Lower lobe of right lung (tissue), 2 donors: ENCODE measurements at regions of chr2 and their contacts with region 1.

Region 1: DNA sequence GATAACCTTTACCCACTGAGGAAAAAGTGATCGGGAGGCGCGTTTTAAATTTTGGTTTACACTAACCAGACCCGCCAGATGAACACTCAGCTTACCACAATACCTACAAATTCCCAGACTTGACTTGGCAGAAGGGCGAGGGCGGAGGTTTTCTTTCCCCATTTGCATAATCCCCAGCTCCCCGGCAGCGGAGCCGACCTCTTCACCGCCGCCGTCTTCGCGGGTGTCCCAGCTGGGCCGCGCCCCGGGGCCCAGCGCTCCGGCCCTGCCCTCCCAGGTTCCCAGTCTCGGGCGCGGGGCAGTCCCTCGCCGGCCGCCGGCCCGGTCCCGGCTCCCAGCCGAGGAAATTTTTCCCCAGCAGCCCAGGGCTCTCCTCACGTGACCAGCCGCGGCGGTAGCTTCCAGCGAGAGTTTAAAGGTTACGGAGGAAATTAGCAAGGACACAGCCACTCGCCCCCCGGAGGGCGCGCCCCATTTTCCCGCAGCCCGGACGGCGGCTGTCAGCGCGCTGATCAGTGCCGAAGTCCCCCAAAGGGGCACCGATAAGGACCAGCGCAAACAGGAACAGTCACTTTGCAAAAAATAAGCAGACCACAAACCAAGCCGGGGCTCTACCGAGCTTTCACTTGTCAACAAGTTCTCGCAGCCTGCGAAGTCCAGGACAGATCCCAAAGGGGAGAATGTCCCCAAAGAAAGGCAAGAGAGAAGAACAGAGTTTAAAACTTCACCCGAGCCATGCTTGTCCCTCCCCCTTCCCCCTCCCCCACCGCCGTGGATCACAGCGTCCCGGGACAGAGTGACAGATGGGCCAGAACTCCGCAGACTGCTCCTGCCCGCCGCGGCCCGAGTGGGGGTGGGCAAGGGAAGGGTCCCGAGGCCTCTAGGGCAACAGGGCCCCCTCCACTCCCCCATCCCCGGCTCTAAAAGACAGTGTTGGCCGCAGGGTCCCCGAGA is 1.3 kb upstream of the PRKCE start:
- DNase-seq: peak; percentile 83
- ATAC-seq: peak; percentile 73 to 80
- H3K4me3 ChIP-seq: peak overlapping the region; percentile 80
- H3K27ac ChIP-seq: peak overlapping the region; percentile 98
- H3K4me1 ChIP-seq: peaks cover 51% of the 10 kb centered on the region
- H3K27me3 ChIP-seq: no peaks in the 10 kb centered on the region
- CTCF ChIP-seq: no peak

Region 2: DNA sequence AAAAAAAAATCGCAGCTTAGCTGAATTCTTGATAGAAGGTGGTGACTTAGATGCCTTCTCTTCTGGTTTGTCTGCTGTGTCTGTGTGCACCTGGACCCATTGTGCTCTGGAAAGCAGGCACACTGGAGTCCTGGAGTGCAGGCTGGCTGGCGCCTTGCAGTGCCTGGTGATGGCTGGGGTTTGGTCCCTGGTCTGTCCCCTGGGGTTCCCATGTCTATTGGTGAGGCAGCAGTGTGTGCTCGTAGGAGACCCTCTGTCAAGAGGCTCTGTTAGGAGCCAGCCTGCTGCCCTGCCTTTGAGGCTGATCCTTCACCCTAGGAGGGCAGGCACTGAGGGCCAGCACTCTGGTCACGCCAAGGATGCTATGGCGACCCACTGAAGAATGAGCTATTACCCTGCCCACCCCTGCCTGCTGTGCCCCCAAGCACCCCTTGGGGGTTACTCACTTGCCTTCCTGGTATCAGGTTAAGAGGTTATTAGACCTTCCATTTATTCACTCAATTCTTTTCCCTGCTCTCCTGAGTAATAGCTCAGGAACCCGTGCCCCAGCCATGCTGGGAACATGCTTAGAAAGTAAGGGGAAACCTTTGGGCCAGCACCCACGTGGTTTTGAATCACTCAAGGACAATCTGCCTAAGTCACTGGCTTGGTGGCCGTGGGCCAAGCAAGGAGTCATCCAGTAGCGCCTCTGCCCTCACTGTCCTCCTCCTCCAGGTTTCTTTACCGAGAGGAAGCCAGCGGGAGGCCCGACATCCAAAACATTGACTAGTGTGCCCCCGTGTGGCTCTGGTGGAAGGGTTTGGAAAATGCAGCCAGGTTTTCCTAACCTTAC is 285.9 kb after region 1 on chr2:
- intact Hi-C with region 1: loop called (anchors 5 kb)
- DNase-seq: peak; percentile 93
- ATAC-seq: peak; percentile 87 to 93
- H3K4me3 ChIP-seq: no peak overlapping the region
- H3K27ac ChIP-seq: no peak overlapping the region
- H3K4me1 ChIP-seq: peaks cover 39% of the 10 kb centered on the region
- H3K27me3 ChIP-seq: no peaks in the 10 kb centered on the region
- CTCF ChIP-seq: peak; percentile 82

Region 3: DNA sequence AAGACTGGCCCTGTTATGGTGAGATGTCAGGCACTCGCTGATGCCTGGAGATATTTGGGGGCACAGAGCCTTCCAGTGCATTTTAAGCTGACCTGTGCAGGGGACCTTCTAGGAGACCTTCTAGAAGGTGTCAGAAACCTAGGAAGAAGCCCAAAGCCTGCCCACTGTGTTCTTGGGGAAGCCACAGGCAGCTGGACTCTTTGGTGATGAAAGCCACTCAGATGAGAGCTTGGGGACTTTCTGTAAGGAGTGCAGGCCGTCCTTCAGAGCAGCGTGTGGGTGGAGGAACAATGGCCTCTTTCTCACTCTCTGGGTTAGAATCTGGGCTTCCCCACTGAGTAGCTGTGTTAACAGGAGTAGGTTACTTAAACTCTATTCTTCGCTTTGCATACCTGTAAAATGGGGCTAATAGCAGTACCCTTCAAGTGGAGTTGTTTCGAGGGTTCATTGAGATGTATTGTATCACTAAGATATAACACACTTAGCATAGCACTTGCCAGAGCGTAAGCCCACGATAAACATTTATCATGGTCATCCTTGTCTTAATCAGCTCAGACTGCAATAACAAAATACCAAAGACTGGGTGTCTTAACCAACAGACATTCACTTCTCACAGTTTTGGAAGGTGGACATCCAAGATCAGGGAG is 324.8 kb after region 1 on chr2:
- intact Hi-C with region 1: no loop called
- DNase-seq: no peak
- ATAC-seq: no peak
- H3K4me3 ChIP-seq: no peak overlapping the region
- H3K27ac ChIP-seq: no peak overlapping the region
- H3K4me1 ChIP-seq: no peaks in the 10 kb centered on the region
- H3K27me3 ChIP-seq: no peaks in the 10 kb centered on the region
- CTCF ChIP-seq: no peak